T-cell (primary cell): ENCODE measurements at regions of chr1 and their contacts with region 1.

Region 1: DNA sequence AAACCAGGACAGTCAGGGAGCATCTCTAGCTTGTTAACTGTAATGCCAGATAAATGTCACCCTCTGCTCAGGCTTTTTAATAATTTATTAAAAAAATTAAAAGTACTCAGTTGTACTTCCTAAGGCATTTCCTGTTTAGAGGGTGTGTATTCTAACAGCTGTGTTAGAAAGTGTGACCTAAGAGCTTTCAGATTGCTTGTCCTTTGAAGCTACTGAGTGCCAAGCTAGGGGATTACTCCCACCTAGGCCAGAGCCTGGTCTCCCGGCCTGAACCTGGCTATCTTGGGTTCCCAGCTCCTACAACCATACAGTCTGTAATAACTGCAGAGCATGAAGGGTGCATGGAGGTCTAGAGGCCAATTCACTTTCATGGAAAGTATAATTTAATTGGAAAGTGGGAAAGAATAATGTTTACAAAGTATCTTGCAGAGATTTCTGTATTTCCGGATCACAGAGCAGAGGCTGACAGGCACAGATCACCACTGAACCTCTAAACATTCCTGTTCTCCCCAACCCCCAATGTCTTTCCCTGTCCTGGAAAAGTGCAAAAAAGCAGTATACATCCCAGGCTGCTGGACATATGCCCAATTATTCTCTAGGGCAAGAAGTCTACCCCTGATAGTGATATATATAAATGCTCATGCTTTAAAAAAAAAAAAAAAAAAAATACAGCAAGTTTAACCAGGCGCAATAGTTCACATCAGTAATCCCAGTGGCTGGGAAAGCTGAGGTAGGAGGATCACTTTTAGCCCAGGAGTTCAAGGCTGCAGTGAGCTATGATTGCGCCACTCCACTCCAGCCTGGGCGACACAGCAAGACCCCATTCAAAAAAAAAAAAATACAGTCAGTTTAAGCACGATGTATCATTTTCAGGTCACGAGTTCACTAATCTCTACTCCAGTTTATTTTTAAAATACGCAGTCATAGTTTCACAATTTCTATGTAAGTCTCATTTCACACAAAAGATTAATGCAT is 36.7 kb upstream of the RAP1A start:
- DNase-seq: no peak
- ATAC-seq: no peak
- H3K4me3 ChIP-seq: no peak overlapping the region
- H3K4me3 Mint-ChIP-seq: no peak overlapping the region
- H3K27ac ChIP-seq: no peak overlapping the region
- H3K27ac Mint-ChIP-seq: peak overlapping the region in 1 of 2 donors; percentile 12
- H3K4me1 ChIP-seq: peaks cover 0 to 10% of the 10 kb centered on the region in 2 experiments
- H3K4me1 Mint-ChIP-seq: peaks cover 0 to 11% (median 10%) of the 10 kb centered on the region in 3 donors
- H3K27me3 ChIP-seq: no peaks in the 10 kb centered on the region
- H3K27me3 Mint-ChIP-seq: no peaks in the 10 kb centered on the region

Region 2: DNA sequence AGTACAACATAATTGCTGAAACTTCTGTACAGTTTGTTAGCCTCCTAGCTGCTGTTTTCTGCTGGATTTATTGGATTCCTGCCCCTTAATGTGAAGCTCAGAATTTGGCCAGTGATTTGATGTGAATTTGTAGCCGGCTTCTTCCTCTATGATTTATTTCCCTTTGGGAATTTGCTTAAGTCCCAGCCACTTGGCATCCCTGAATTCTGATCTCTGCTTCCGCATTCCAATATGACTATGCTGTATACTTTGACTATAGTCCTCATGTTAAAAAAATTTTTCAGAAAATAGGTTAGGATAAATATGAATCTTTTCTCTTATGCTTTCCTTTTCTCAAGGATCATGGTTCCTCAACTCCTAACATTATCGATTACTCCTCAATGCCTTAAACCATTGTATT is 606.8 kb before region 1 on chr1:
- CTCF ChIA-PET with region 1: interaction called in 1 of 2 experiments, 10 read pairs
- POLR2A ChIA-PET with region 1: no interaction called
- DNase-seq: no peak
- ATAC-seq: no peak
- H3K4me3 ChIP-seq: no peak overlapping the region
- H3K4me3 Mint-ChIP-seq: no peak overlapping the region
- H3K27ac ChIP-seq: no peak overlapping the region
- H3K27ac Mint-ChIP-seq: no peak overlapping the region
- H3K4me1 ChIP-seq: no peaks in the 10 kb centered on the region
- H3K4me1 Mint-ChIP-seq: no peaks in the 10 kb centered on the region
- H3K27me3 ChIP-seq: peaks cover 3 to 14% of the 10 kb centered on the region in 2 experiments
- H3K27me3 Mint-ChIP-seq: peaks cover 47 to 60% of the 10 kb centered on the region in 2 donors

Region 3: DNA sequence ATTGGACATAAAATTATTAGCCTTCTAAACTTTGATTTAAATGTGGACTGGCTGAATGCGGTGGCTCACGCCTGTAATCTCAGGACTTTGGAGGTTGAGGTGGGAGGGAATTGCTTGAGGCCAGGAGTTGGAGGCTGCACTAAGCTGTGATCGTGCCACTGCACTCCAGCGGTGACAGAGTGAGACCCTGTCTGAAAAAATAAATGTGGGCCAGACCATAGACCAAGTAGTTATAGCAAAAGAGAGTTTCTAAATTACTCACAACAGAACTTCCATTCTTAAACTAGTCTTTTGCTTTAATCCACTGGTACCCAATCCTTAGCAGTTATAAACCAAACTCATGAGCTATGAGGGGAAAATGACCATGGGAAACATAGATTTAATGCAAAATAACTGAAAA is 71.9 kb after region 1 on chr1:
- CTCF ChIA-PET with region 1: no interaction called
- POLR2A ChIA-PET with region 1: interaction called in 1 of 2 experiments, 13 read pairs
- DNase-seq: no peak
- ATAC-seq: no peak
- H3K4me3 ChIP-seq: no peak overlapping the region
- H3K4me3 Mint-ChIP-seq: no peak overlapping the region
- H3K27ac ChIP-seq: no peak overlapping the region
- H3K27ac Mint-ChIP-seq: peak overlapping the region; percentile 52 to 60
- H3K4me1 ChIP-seq: peaks cover 28 to 43% of the 10 kb centered on the region in 2 experiments
- H3K4me1 Mint-ChIP-seq: peaks cover 61 to 66% (median 65%) of the 10 kb centered on the region in 3 donors
- H3K27me3 ChIP-seq: no peaks in the 10 kb centered on the region
- H3K27me3 Mint-ChIP-seq: no peaks in the 10 kb centered on the region

Region 4: GRCh38 chr1:111733183-111733991 is 150.5 kb after region 1 on chr1:
- CTCF ChIA-PET with region 1: no interaction called
- POLR2A ChIA-PET with region 1: no interaction called
- DNase-seq: peak in 4 of 35 experiments; percentile 3 to 27 (median 16)
- ATAC-seq: no peak
- H3K4me3 ChIP-seq: no peak overlapping the region
- H3K4me3 Mint-ChIP-seq: no peak overlapping the region
- H3K27ac ChIP-seq: no peak overlapping the region
- H3K27ac Mint-ChIP-seq: no peak overlapping the region
- H3K4me1 ChIP-seq: peaks cover 0 to 13% of the 10 kb centered on the region in 2 experiments
- H3K4me1 Mint-ChIP-seq: peaks cover 8 to 11% (median 10%) of the 10 kb centered on the region in 3 donors
- H3K27me3 ChIP-seq: peaks cover 0 to 41% of the 10 kb centered on the region in 2 experiments
- H3K27me3 Mint-ChIP-seq: peaks cover 7 to 10% of the 10 kb centered on the region in 2 donors